ENCODE measurements at regions of chr17 and their contacts with region 1.

Region 1: GRCh38 chr17:82273327-82274133 is at the start of gene CSNK1D:
- DNase-seq: peak; percentile 86 to 97 (median 92)
- ATAC-seq: peak; percentile 77
- H3K4me3 ChIP-seq: peak within 1 kb of the TSS; percentile 71 to 87
- H3K4me3 Mint-ChIP-seq: peak within 1 kb of the TSS; percentile 95
- H3K27ac ChIP-seq: peak within 1 kb of the TSS; percentile 84 to 88
- H3K27ac Mint-ChIP-seq: peak within 1 kb of the TSS; percentile 99
- H3K4me1 ChIP-seq: peaks cover 47% of the 10 kb centered on the region
- H3K4me1 Mint-ChIP-seq: peaks cover 43% of the 10 kb centered on the region
- H3K27me3 ChIP-seq: no peaks in the 10 kb centered on the region
- H3K27me3 Mint-ChIP-seq: no peaks in the 10 kb centered on the region
- CTCF ChIP-seq: no peak
- total RNA-seq, gene CSNK1D: 369 to 393 TPM

Region 2: DNA sequence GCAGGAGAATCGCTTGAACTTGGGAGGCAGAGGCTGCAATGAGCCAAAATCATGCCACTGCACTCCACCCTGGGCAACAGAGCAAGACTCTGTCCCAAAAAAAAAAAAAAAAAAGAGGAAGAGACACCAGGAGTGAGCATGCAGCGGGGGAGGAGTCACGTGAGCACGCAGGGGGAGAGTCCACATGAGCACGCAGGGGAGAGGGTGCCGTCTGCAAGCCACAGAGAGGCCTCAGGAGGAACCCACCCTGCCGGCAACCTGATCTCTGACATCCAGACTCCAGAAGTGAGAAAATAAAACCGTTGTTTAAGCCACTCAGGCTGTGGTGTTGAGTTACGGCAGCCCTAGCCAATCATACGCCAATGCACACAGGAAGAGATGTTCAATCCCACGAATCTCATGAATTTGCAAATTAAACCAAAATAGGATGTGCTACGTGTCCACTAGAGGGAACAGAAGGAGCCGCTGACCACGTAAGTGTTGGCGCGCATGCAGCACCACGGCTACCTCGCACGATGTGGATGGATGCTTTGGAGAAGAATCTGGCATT is 103.0 kb before region 1 on chr17:
- CTCF ChIA-PET with region 1: no interaction called
- POLR2A ChIA-PET with region 1: no interaction called
- intact Hi-C with region 1: no loop called
- DNase-seq: no peak
- ATAC-seq: no peak
- H3K4me3 ChIP-seq: no peak overlapping the region
- H3K4me3 Mint-ChIP-seq: no peak overlapping the region
- H3K27ac ChIP-seq: no peak overlapping the region
- H3K27ac Mint-ChIP-seq: no peak overlapping the region
- H3K4me1 ChIP-seq: no peaks in the 10 kb centered on the region
- H3K4me1 Mint-ChIP-seq: no peaks in the 10 kb centered on the region
- H3K27me3 ChIP-seq: no peaks in the 10 kb centered on the region
- H3K27me3 Mint-ChIP-seq: no peaks in the 10 kb centered on the region
- CTCF ChIP-seq: no peak

Region 3: GRCh38 chr17:82230627-82231311 is 42.8 kb before region 1 on chr17:
- CTCF ChIA-PET with region 1: interaction called, 5 read pairs
- POLR2A ChIA-PET with region 1: interaction called, 3 read pairs
- intact Hi-C with region 1: loop called in 1 of 2 experiments (anchors 2 kb)
- DNase-seq: peak in 6 of 9 experiments; percentile 54 to 79 (median 69)
- ATAC-seq: peak; percentile 32
- H3K4me3 ChIP-seq: peak overlapping the region; percentile 39 to 44
- H3K4me3 Mint-ChIP-seq: peak overlapping the region; percentile 82
- H3K27ac ChIP-seq: peak overlapping the region in 1 of 2 experiments; percentile 66
- H3K27ac Mint-ChIP-seq: no peak overlapping the region
- H3K4me1 ChIP-seq: peaks cover 42% of the 10 kb centered on the region
- H3K4me1 Mint-ChIP-seq: peaks cover 14% of the 10 kb centered on the region
- H3K27me3 ChIP-seq: no peaks in the 10 kb centered on the region
- H3K27me3 Mint-ChIP-seq: no peaks in the 10 kb centered on the region
- CTCF ChIP-seq: no peak

Region 4: DNA sequence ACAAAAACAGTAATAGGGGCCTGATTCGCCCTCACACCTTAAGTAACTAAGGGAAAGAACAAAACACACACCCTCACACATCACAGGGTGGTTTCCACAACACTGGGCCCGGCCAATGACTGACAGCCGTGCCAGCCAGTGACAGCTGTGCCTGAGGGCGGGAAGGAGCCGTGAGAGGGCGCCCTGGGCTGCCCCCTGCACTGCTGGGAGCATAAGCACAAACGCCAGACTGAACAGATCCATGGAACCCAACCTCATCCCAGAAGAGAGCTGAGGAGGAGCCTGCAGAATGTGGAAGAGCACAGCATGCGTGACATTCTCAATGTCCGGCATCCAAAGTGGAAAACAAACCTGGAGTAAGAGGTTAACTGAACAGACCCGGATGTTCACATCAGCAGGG is 16.1 kb before region 1 on chr17:
- CTCF ChIA-PET with region 1: no interaction called
- POLR2A ChIA-PET with region 1: interaction called, 3 read pairs
- intact Hi-C with region 1: loop called in 1 of 2 experiments (anchors 2 kb)
- DNase-seq: peak; percentile 44 to 92 (median 67)
- ATAC-seq: peak; percentile 94
- H3K4me3 ChIP-seq: no peak overlapping the region
- H3K4me3 Mint-ChIP-seq: no peak overlapping the region
- H3K27ac ChIP-seq: peak overlapping the region; percentile 31 to 71
- H3K27ac Mint-ChIP-seq: peak overlapping the region; percentile 91
- H3K4me1 ChIP-seq: peaks cover 5% of the 10 kb centered on the region
- H3K4me1 Mint-ChIP-seq: peaks cover 39% of the 10 kb centered on the region
- H3K27me3 ChIP-seq: no peaks in the 10 kb centered on the region
- H3K27me3 Mint-ChIP-seq: no peaks in the 10 kb centered on the region
- CTCF ChIP-seq: no peak

Region 5: GRCh38 chr17:82292251-82293154 is 19.0 kb after region 1 on chr17:
- CTCF ChIA-PET with region 1: interaction called, 3 read pairs
- POLR2A ChIA-PET with region 1: interaction called, 16 read pairs
- intact Hi-C with region 1: loop called (anchors 1 kb)
- DNase-seq: peak; percentile 85 to 98 (median 90)
- ATAC-seq: peak; percentile 85
- H3K4me3 ChIP-seq: peak overlapping the region; percentile 65 to 78
- H3K4me3 Mint-ChIP-seq: peak overlapping the region; percentile 88
- H3K27ac ChIP-seq: peak overlapping the region; percentile 88 to 96
- H3K27ac Mint-ChIP-seq: peak overlapping the region; percentile 94
- H3K4me1 ChIP-seq: peaks cover 26% of the 10 kb centered on the region
- H3K4me1 Mint-ChIP-seq: peaks cover 40% of the 10 kb centered on the region
- H3K27me3 ChIP-seq: no peaks in the 10 kb centered on the region
- H3K27me3 Mint-ChIP-seq: no peaks in the 10 kb centered on the region
- CTCF ChIP-seq: no peak

Region 6: GRCh38 chr17:82315703-82316358 is 42.3 kb after region 1 on chr17:
- CTCF ChIA-PET with region 1: interaction called, 4 read pairs
- POLR2A ChIA-PET with region 1: interaction called, 7 read pairs
- intact Hi-C with region 1: loop called (anchors 1 kb)
- DNase-seq: peak in 8 of 9 experiments; percentile 46 to 83 (median 71)
- ATAC-seq: peak; percentile 43
- H3K4me3 ChIP-seq: peak overlapping the region; percentile 90 to 91
- H3K4me3 Mint-ChIP-seq: peak overlapping the region; percentile 94
- H3K27ac ChIP-seq: peak overlapping the region; percentile 76 to 78
- H3K27ac Mint-ChIP-seq: peak overlapping the region; percentile 94
- H3K4me1 ChIP-seq: peaks cover 35% of the 10 kb centered on the region
- H3K4me1 Mint-ChIP-seq: peaks cover 26% of the 10 kb centered on the region
- H3K27me3 ChIP-seq: no peaks in the 10 kb centered on the region
- H3K27me3 Mint-ChIP-seq: no peaks in the 10 kb centered on the region
- CTCF ChIP-seq: no peak

Region 7: GRCh38 chr17:82320956-82321927 is 47.7 kb after region 1 on chr17:
- CTCF ChIA-PET with region 1: interaction called, 4 read pairs
- POLR2A ChIA-PET with region 1: interaction called, 7 read pairs
- intact Hi-C with region 1: loop called (anchors 1 kb)
- DNase-seq: peak; percentile 46 to 94 (median 84)
- ATAC-seq: peak; percentile 44
- H3K4me3 ChIP-seq: peak overlapping the region; percentile 25 to 56
- H3K4me3 Mint-ChIP-seq: peak overlapping the region; percentile 74
- H3K27ac ChIP-seq: peak overlapping the region in 1 of 2 experiments; percentile 36
- H3K27ac Mint-ChIP-seq: peak overlapping the region; percentile 92
- H3K4me1 ChIP-seq: peaks cover 24% of the 10 kb centered on the region
- H3K4me1 Mint-ChIP-seq: peaks cover 19% of the 10 kb centered on the region
- H3K27me3 ChIP-seq: peaks cover 0 to 5% of the 10 kb centered on the region in 2 experiments
- H3K27me3 Mint-ChIP-seq: no peaks in the 10 kb centered on the region
- CTCF ChIP-seq: peak; percentile 97

Measured in CD8-positive, alpha-beta T cell (primary cell).